B cell (primary cell): ENCODE measurements at regions of chrX and their contacts with region 1.

Region 1: DNA sequence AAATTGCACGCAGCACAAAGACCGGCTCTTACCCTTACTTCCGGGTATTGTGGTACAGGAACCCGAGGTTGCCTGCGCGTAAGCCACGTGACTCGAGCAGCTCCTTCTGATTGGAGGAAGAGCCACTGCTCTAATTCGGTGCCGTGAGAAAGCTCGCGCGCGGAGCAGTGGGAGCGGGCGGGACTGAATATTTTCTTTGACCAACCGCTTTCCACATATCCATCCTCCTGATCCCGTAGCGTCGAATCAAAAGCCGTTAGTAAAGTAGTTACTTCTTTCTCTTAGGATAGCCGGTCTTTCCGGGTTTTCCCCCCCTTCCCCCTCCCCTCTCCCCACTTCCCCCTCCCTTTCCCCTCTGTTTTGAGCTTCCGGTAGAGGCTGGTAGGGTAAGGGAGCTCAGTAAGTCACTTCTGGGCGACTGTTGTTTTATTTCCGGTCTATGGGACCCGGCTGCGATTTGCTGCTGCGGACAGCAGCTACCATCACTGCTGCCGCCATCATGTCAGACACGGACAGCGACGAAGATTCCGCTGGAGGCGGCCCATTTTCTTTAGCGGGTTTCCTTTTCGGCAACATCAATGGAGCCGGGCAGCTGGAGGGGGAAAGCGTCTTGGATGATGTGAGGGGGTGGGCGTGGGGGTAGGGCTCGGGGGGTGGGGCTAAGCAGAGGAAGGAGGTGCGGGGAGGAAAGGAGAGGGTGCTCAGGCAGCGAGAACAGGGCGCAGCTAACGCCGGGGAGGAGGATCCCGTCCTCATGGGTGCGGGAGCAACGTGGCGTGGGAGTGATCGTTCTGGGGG is at the start of gene TAF1:
- DNase-seq: peak; percentile 94
- ATAC-seq: peak; percentile 90
- H3K4me3 ChIP-seq: peak within 1 kb of the TSS; percentile 67 to 78 (median 73)
- H3K4me3 Mint-ChIP-seq: peak within 1 kb of the TSS; percentile 97
- H3K27ac ChIP-seq: peak within 1 kb of the TSS; percentile 80 to 95
- H3K27ac Mint-ChIP-seq: peak within 1 kb of the TSS; percentile 99
- H3K4me1 ChIP-seq: peaks cover 12 to 24% of the 10 kb centered on the region in 2 donors
- H3K4me1 Mint-ChIP-seq: peaks cover 24% of the 10 kb centered on the region
- H3K27me3 ChIP-seq: no peaks in the 10 kb centered on the region
- H3K27me3 Mint-ChIP-seq: no peaks in the 10 kb centered on the region
- CTCF ChIP-seq: no peak
- total RNA-seq, gene TAF1: 93.5 and 97.5 TPM in 2 replicates

Region 2: DNA sequence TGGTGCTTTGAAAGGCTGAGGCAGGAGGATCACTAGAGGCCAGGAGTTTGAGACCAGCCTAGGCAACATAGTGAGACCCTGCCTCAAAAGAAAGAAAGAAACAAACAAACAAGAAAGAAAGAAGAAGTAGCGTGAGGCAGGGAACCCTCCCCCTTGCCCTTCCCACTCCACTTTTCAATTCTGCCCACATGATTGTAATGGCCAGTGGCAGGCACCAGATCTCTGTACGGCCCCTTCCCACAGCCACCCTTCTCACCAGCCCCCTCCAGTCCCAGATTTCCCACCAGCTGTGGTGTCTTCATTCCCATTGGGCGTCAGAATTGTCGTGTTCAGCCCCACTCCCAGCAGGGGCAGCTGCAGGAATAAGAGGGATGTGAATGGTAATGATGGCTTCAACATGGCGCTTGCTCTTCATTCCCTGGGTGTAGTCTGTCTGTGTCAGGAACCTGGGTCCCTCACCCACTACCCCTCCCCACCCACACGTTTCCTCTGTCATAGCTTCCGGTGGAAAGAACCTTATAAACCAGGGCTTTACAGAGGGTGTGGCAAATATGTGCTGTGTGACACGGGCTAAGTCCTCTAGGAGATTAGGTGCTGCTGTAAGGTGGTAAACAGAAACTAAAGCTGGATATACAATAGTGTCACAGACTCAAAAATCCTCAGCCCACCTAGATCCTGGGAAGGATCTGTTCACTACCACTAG is 254.8 kb before region 1 on chrX and contains the start of gene IL2RG:
- CTCF ChIA-PET with region 1: no interaction called
- POLR2A ChIA-PET with region 1: interaction called, 10 read pairs
- intact Hi-C with region 1: no loop called
- DNase-seq: peak; percentile 90
- ATAC-seq: peak; percentile 93
- H3K4me3 ChIP-seq: peak within 1 kb of the TSS; percentile 75 to 90 (median 82)
- H3K4me3 Mint-ChIP-seq: peak within 1 kb of the TSS; percentile 98
- H3K27ac ChIP-seq: peak within 1 kb of the TSS; percentile 98
- H3K27ac Mint-ChIP-seq: peak within 1 kb of the TSS; percentile 99
- H3K4me1 ChIP-seq: peaks cover 53 to 65% of the 10 kb centered on the region in 2 donors
- H3K4me1 Mint-ChIP-seq: peaks cover 63% of the 10 kb centered on the region
- H3K27me3 ChIP-seq: no peaks in the 10 kb centered on the region
- H3K27me3 Mint-ChIP-seq: no peaks in the 10 kb centered on the region
- CTCF ChIP-seq: no peak
- total RNA-seq, gene IL2RG: 276 and 297 TPM in 2 replicates

Region 3: GRCh38 chrX:71198066-71198465 is 168.0 kb before region 1 on chrX:
- CTCF ChIA-PET with region 1: no interaction called
- POLR2A ChIA-PET with region 1: interaction called, 4 read pairs
- intact Hi-C with region 1: loop called (anchors 5 kb)
- DNase-seq: peak; percentile 68
- ATAC-seq: peak; percentile 84
- H3K4me3 ChIP-seq: peak overlapping the region; percentile 19 to 68 (median 59)
- H3K4me3 Mint-ChIP-seq: peak overlapping the region; percentile 97
- H3K27ac ChIP-seq: peak overlapping the region; percentile 25 to 53
- H3K27ac Mint-ChIP-seq: peak overlapping the region; percentile 92
- H3K4me1 ChIP-seq: peaks cover 15 to 21% of the 10 kb centered on the region in 2 donors
- H3K4me1 Mint-ChIP-seq: peaks cover 28% of the 10 kb centered on the region
- H3K27me3 ChIP-seq: no peaks in the 10 kb centered on the region
- H3K27me3 Mint-ChIP-seq: no peaks in the 10 kb centered on the region
- CTCF ChIP-seq: no peak

Region 4: DNA sequence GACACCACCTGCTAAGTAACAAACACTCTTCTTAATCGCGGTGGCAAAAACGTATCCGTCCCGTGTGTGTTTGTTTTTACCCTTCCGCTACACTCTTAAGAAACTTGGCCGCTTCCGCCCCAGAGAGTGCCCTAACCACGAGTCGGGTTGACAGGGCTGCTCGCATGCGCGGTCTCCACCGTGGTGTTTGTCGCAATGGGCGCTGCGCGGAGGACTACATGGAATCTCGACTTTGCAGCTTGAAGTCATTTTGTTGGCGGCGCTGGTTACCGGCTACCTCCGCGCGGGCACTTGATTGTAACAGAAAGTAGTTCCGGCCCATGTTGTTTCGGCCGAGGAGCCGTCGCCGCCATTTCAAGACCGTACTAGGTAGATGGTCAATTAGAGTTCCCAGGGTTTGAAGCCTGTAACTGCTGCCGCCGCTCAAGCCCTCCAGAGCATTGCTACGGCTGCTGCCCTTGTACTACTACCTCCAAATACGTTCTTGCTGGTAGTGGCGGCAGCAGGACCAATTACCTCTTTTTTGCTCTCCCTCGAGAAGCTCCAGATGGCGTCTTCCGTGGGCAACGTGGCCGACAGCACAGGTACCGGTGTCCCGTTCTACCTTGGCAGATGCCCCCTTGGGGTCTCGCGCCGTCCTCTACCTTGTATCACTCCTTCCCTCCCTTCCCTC is 166.8 kb after region 1 on chrX and contains the start of gene OGT:
- CTCF ChIA-PET with region 1: no interaction called
- POLR2A ChIA-PET with region 1: interaction called, 14 read pairs
- intact Hi-C with region 1: loop called (anchors 1 kb)
- DNase-seq: peak; percentile 95
- ATAC-seq: peak; percentile 85
- H3K4me3 ChIP-seq: peak within 1 kb of the TSS; percentile 75 to 96 (median 86)
- H3K4me3 Mint-ChIP-seq: peak within 1 kb of the TSS; percentile 97
- H3K27ac ChIP-seq: peak within 1 kb of the TSS; percentile 87
- H3K27ac Mint-ChIP-seq: peak within 1 kb of the TSS; percentile 93
- H3K4me1 ChIP-seq: peaks cover 5 to 27% of the 10 kb centered on the region in 2 donors
- H3K4me1 Mint-ChIP-seq: peaks cover 26% of the 10 kb centered on the region
- H3K27me3 ChIP-seq: no peaks in the 10 kb centered on the region
- H3K27me3 Mint-ChIP-seq: no peaks in the 10 kb centered on the region
- CTCF ChIP-seq: no peak
- total RNA-seq, gene OGT: 307 and 330 TPM in 2 replicates